K562 (cell line): ENCODE measurements at regions of chr3 and their contacts with region 1.

Region 1: DNA sequence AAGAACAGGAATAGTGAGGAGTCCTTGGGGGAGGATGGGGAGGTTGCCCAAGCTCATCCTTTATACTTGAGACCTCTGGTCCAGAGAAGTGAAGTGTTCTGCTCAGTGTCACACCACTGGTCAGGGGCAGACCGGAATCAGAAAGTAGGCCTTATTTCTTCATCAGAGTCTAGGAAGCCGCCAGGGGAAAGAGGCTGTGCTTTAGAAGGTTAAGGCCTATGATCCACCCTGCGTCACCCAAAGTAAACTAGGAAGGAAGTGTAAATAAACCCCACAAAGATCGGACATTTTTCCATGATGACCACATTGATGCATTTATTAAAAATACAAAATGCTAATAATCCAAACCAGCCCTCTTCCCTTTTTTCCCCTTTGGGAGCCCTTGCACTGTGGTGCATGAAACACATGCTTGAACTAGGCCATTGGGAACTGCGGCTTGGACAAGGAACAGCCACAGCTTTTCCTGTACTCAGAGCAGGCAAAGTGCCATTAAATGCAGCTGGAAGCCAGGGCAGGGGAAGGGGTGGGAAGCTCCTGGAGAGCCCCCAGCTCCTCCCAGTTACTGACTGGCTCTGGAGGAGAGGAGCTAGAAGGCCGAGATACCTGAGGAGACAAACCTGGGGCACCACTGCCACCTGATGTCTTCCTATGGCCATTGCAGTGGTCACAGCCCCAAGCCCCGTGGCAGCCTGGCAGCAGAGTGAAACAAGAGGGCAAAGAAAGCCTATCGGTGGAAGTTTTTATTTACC is 37.0 kb downstream of the CDC25A start:
- DNase-seq: peak; percentile 75 to 83 (median 76)
- ATAC-seq: peak; percentile 98
- H3K4me3 ChIP-seq: no peak overlapping the region
- H3K27ac ChIP-seq: no peak overlapping the region
- H3K4me1 ChIP-seq: 0 out of 5 replicates have a peak, but pooled peaks cover 0 to 2% of the 10 kb centered on the region in 2 experiments
- H3K27me3 ChIP-seq: 0 out of 5 replicates have a peak, but pooled peaks cover 0 to 2% of the 10 kb centered on the region in 2 experiments
- CTCF ChIP-seq: peak; percentile 88 to 96 (median 95)
- EP300 ChIP-seq: peak; percentile 19; the same call in 1 of the 2 replicates
- POLR2A ChIP-seq: no peak
- RAD21 ChIP-seq: peak; percentile 90 to 95

Region 2: DNA sequence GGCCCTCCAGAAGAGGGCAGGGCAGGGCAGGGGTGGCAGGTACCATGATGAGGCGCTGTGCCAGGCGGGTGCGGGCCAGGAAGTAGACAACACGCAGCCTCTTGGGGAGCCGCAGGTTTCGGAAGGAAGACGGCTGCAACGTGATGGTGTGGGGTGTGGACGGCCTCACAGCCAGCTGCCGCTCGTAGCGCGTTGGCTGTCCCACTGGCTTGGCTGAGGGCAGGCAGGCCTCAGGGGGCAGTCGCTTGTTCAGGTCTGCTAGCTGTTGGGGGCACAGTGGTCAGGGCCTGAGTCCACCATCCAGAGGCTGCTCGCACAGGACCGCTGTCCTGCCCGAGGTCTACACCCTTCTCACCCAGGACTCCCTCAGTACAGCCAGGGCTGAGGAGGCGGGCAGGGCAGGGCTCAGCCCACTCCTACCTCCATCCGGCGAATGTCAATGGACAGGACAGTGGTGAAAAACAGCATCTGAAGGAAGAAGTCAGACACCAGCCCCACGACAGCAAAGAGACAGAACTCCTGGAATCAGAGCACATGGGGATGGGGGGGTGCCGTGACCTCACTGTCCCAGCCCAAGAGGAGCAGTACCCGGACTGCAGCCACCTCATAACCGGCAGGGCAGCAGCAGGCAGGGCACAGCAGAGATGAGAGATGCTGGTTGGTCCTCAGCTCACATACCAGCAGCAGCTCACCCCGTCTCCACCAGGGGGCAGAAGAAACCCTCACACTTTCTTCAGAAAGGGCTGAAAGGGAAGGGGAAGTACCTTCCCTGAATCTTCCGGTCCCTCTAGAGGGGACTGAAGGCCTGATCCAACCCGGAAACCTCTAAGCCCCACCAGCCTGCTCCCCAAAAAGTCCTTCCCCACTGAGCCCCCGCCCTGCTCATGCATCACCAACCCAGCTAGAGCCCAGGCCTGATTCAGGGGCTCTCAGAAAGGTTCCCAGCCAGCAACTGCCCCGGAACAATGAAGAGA is 730.4 kb before region 1 on chr3:
- CTCF ChIA-PET with region 1: no interaction called
- POLR2A ChIA-PET with region 1: interaction called, 5 read pairs
- in situ Hi-C with region 1: no loop called
- intact Hi-C with region 1: loop called (anchors 5 kb)
- DNase-seq: peak; percentile 90 to 95 (median 91)
- ATAC-seq: peak; percentile 95
- H3K4me3 ChIP-seq: no peak overlapping the region
- H3K27ac ChIP-seq: peak overlapping the region; percentile 61
- H3K4me1 ChIP-seq: peaks cover 6 to 50% of the 10 kb centered on the region in 2 experiments; a peak in 3 of 5 replicates
- H3K27me3 ChIP-seq: no peaks in the 10 kb centered on the region
- CTCF ChIP-seq: peak; percentile 95 to 98 (median 97)
- EP300 ChIP-seq: 0 out of 2 replicates have a peak, but pooled peaks have one; percentile 33
- POLR2A ChIP-seq: 0 out of 2 replicates have a peak, but pooled peaks have one; percentile 34
- RAD21 ChIP-seq: peak; percentile 93 to 95

Region 3: GRCh38 chr3:47715928-47716327 is 435.3 kb before region 1 on chr3:
- CTCF ChIA-PET with region 1: no interaction called
- POLR2A ChIA-PET with region 1: no interaction called
- in situ Hi-C with region 1: no loop called
- intact Hi-C with region 1: loop called (anchors 10 kb)
- DNase-seq: peak in 1 of 4 experiments; percentile 34
- ATAC-seq: peak; percentile 54
- H3K4me3 ChIP-seq: no peak overlapping the region
- H3K27ac ChIP-seq: peak overlapping the region; percentile 10; the same call in 2 of the 3 replicates
- H3K4me1 ChIP-seq: no peaks in the 10 kb centered on the region; a peak in 1 of 5 replicates
- H3K27me3 ChIP-seq: no peaks in the 10 kb centered on the region
- CTCF ChIP-seq: no peak
- EP300 ChIP-seq: no peak
- POLR2A ChIP-seq: no peak
- RAD21 ChIP-seq: no peak

Region 4: DNA sequence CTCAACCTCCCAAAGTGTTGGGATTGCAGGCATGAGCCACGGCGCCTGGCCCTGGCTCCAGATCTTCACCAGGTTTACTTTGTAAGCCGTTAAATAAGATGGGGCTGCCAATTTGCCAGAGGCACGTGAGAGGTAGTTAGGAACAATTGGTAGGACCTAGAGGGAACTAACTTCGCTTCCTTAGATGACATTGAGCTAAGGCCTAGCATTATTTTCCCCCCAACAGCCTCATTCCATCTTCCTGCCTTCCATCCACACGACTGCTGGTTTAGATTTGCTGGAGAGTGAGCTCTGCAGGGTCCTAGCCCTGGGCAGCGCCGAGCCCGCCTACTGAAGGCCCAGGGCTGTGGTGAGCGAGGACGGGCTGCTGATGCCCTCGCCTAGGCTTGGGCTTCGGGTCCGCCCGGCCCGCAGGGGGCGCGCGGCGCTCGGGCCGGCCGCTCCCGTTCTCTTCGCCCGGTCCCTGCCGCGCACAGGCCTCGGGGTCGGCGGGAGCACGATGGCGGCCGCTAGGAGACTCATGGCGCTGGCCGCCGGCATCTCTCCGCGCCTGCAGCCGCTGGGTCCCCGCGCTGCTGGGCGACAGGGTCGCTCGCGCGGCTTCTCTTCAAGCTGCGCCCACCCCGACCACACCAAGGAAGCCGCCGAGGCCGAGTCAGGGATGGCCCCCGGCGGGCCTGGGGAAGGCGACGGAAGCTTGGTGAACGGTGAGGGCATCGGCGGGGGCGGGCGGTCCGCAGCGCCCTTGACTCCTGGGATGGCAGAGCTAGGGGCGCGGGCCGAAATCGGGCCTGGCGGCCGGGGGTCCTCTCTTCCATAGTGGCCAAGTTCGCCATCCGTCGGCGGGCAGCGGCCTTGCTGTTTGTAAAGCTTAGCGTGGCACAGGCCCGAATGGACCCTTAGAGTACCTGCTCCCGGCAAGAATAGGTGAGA is 326.4 kb before region 1 on chr3:
- CTCF ChIA-PET with region 1: interaction called, 13 read pairs
- POLR2A ChIA-PET with region 1: no interaction called
- in situ Hi-C with region 1: loop called (anchors 5 kb)
- intact Hi-C with region 1: no loop called
- DNase-seq: peak; percentile 93 to 98 (median 96)
- ATAC-seq: peak; percentile 99
- H3K4me3 ChIP-seq: peak overlapping the region; percentile 90
- H3K27ac ChIP-seq: peak overlapping the region; percentile 92
- H3K4me1 ChIP-seq: peaks cover 14 to 18% of the 10 kb centered on the region in 2 experiments; a peak in 4 of 5 replicates
- H3K27me3 ChIP-seq: no peaks in the 10 kb centered on the region
- CTCF ChIP-seq: peak; percentile 90 to 94 (median 90)
- EP300 ChIP-seq: no peak
- POLR2A ChIP-seq: peak; percentile 94
- RAD21 ChIP-seq: peak; percentile 64 to 68

Region 5: GRCh38 chr3:47849699-47850563 is 301.3 kb before region 1 on chr3:
- CTCF ChIA-PET with region 1: no interaction called
- POLR2A ChIA-PET with region 1: interaction called, 4 read pairs
- in situ Hi-C with region 1: no loop called
- intact Hi-C with region 1: loop called (anchors 5 kb)
- DNase-seq: peak in 2 of 4 experiments; percentile 46 to 60
- ATAC-seq: peak; percentile 85
- H3K4me3 ChIP-seq: no peak overlapping the region
- H3K27ac ChIP-seq: no peak overlapping the region
- H3K4me1 ChIP-seq: peaks cover 0 to 30% of the 10 kb centered on the region in 2 experiments; a peak in 1 of 5 replicates
- H3K27me3 ChIP-seq: no peaks in the 10 kb centered on the region
- CTCF ChIP-seq: peak; percentile 67 to 80 (median 68)
- EP300 ChIP-seq: no peak
- POLR2A ChIP-seq: no peak
- RAD21 ChIP-seq: peak in 1 of 2 experiments; percentile 44; a peak in 2 of 4 replicates

Region 6: GRCh38 chr3:47989981-47990440 is 161.2 kb before region 1 on chr3:
- CTCF ChIA-PET with region 1: no interaction called
- POLR2A ChIA-PET with region 1: no interaction called
- in situ Hi-C with region 1: no loop called
- intact Hi-C with region 1: loop called (anchors 2 kb)
- DNase-seq: peak; percentile 78 to 89 (median 82)
- ATAC-seq: peak; percentile 98
- H3K4me3 ChIP-seq: no peak overlapping the region
- H3K27ac ChIP-seq: no peak overlapping the region
- H3K4me1 ChIP-seq: peaks cover 0 to 2% of the 10 kb centered on the region in 2 experiments; a peak in 1 of 5 replicates
- H3K27me3 ChIP-seq: no peaks in the 10 kb centered on the region
- CTCF ChIP-seq: peak; percentile 84 to 98 (median 97)
- EP300 ChIP-seq: no peak
- POLR2A ChIP-seq: no peak
- RAD21 ChIP-seq: peak; percentile 88 to 92

Region 7: DNA sequence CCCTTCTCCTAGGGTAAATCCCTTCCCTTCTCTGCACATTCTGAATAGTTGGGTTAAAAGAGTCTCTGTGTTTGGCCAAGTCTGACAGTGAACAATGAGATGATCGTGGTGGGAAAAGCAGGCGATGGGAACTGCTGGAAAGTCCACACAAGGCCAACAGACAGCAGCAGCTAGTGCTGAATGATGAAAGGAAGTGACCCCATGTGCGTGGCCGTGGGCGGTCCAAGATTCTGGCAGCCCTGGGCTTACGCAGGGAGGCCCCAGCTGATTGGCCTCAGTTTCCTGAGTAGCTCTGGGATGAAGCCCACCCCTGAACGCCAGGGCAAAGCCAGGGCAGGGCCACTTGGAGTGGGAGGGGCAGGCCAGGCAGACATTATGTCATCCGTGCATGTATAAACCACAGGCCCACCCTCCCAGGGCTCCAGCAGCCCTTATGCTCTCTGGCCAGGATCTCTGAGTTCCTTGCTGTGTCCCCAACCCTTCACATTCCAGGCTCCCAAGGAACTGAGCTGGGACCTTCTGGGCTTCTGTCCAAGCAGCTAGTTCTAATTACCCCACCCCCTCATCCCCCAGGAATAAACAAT is 20.8 kb before region 1 on chr3:
- CTCF ChIA-PET with region 1: no interaction called
- POLR2A ChIA-PET with region 1: no interaction called
- in situ Hi-C with region 1: no loop called
- intact Hi-C with region 1: no loop called
- DNase-seq: peak in 1 of 4 experiments; percentile 32
- ATAC-seq: peak; percentile 71
- H3K4me3 ChIP-seq: no peak overlapping the region
- H3K27ac ChIP-seq: no peak overlapping the region
- H3K4me1 ChIP-seq: peaks cover 0 to 3% of the 10 kb centered on the region in 2 experiments; a peak in 2 of 5 replicates
- H3K27me3 ChIP-seq: peaks cover 8 to 28% of the 10 kb centered on the region in 2 experiments
- CTCF ChIP-seq: no peak
- EP300 ChIP-seq: no peak
- POLR2A ChIP-seq: no peak
- RAD21 ChIP-seq: no peak

Region 8: DNA sequence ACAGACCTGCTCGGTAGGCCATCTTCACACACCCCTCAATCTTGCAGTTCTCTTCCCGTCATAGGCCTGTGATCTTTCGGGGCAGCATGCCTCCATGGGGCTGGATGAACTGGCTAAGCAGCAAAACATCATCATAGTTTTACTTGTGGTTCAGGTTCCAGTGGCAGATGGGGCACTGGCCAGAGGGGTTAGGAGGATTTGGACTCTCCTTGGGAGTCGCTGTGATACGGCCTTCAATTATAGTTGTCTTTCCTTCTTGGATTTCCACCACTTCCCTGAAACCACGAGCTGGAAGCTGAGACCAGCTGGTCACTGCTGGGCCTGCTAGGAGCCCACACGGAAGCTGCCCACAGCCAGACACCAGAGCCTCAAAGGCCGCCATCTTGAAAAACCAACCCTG is 105.3 kb after region 1 on chr3:
- CTCF ChIA-PET with region 1: no interaction called
- POLR2A ChIA-PET with region 1: no interaction called
- in situ Hi-C with region 1: no loop called
- intact Hi-C with region 1: no loop called
- DNase-seq: no peak
- ATAC-seq: no peak
- H3K4me3 ChIP-seq: no peak overlapping the region
- H3K27ac ChIP-seq: no peak overlapping the region
- H3K4me1 ChIP-seq: no peaks in the 10 kb centered on the region; a peak in 1 of 5 replicates
- H3K27me3 ChIP-seq: no peaks in the 10 kb centered on the region
- CTCF ChIP-seq: no peak
- EP300 ChIP-seq: no peak
- POLR2A ChIP-seq: no peak
- RAD21 ChIP-seq: no peak